ENCODE measurements at regions of chr3 and their contacts with region 1.

Region 1: GRCh38 chr3:115783938-115784738 is 160.8 kb downstream of the GAP43 start:
- DNase-seq: peak; percentile 72 to 90
- H3K4me3 ChIP-seq: peak overlapping the region; percentile 46 to 80 (median 67)
- H3K27ac ChIP-seq: no peak overlapping the region
- H3K4me1 ChIP-seq: peaks cover 0 to 3% (median under 1%) of the 10 kb centered on the region in 4 experiments; a peak in 1 of 7 replicates
- H3K27me3 ChIP-seq: no peaks in the 10 kb centered on the region
- CTCF ChIP-seq: peak; percentile 90 to 99 (median 92)
- EP300 ChIP-seq: peak in 1 of 2 experiments; percentile 25; a peak in 1 of 3 replicates
- POLR2A ChIP-seq: no peak
- RAD21 ChIP-seq: peak; percentile 82 to 87

Region 2: GRCh38 chr3:114697401-114697800 is 1086.7 kb before region 1 on chr3:
- CTCF ChIA-PET with region 1: no interaction called
- POLR2A ChIA-PET with region 1: no interaction called
- DNase-seq: no peak
- H3K4me3 ChIP-seq: no peak overlapping the region
- H3K27ac ChIP-seq: no peak overlapping the region
- H3K4me1 ChIP-seq: peaks cover 0 to 7% (median 2%) of the 10 kb centered on the region in 4 experiments; a peak in 2 of 7 replicates
- H3K27me3 ChIP-seq: no peaks in the 10 kb centered on the region
- CTCF ChIP-seq: no peak
- EP300 ChIP-seq: no peak
- POLR2A ChIP-seq: no peak
- RAD21 ChIP-seq: no peak

Region 3: DNA sequence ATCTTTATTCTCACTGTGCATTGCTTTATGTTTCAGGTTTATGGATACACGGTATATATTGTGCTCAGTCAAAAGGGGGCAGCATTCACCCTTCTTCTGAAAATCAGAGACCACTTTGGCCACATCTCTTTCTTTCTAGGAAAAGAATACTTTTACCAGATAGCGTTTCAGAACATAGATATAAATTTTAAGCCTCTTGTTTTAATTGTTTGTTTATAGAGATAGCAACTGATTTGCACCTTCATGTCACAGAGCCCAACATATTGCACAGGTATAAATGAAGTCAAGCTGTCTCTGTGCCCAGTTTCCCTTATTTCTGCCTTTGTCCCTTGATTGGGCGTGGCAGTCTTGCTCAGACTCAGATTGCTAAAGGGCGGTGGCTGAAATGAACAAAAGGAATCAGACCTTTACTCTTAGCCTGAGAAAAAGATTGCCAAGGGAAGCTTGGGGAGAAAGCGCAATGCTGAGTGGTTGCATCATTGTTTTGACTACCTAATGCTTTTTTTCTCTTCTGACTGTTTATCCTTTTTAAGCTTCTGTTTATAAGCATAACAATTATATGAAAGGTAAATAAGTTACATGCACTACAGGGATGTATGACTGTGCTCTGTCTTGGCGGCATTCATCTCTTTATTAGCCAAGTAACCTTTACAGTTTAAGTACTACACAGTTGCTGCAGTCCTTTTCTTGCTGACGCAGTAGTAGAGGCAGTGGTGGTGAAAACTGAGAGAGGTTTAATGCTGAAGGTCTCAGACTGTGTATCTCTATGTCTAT is 566.3 kb before region 1 on chr3:
- CTCF ChIA-PET with region 1: interaction called, 27 read pairs
- POLR2A ChIA-PET with region 1: interaction called, 3 read pairs
- DNase-seq: peak in 1 of 2 experiments; percentile 25
- H3K4me3 ChIP-seq: no peak overlapping the region
- H3K27ac ChIP-seq: no peak overlapping the region
- H3K4me1 ChIP-seq: peaks cover 0 to 6% (median 5%) of the 10 kb centered on the region in 4 experiments; a peak in 2 of 7 replicates
- H3K27me3 ChIP-seq: no peaks in the 10 kb centered on the region
- CTCF ChIP-seq: peak in 2 of 3 experiments; percentile 53 to 62; a peak in 2 of 4 replicates
- EP300 ChIP-seq: no peak
- POLR2A ChIP-seq: no peak
- RAD21 ChIP-seq: peak; percentile 87 to 88

Region 4: GRCh38 chr3:115692887-115693524 is 91.1 kb before region 1 on chr3:
- CTCF ChIA-PET with region 1: interaction called, 14 read pairs
- POLR2A ChIA-PET with region 1: no interaction called
- DNase-seq: peak; percentile 41 to 84
- H3K4me3 ChIP-seq: no peak overlapping the region
- H3K27ac ChIP-seq: no peak overlapping the region
- H3K4me1 ChIP-seq: no peaks in the 10 kb centered on the region
- H3K27me3 ChIP-seq: no peaks in the 10 kb centered on the region
- CTCF ChIP-seq: peak; percentile 61 to 89 (median 83)
- EP300 ChIP-seq: no peak
- POLR2A ChIP-seq: no peak
- RAD21 ChIP-seq: peak; percentile 99

Region 5: DNA sequence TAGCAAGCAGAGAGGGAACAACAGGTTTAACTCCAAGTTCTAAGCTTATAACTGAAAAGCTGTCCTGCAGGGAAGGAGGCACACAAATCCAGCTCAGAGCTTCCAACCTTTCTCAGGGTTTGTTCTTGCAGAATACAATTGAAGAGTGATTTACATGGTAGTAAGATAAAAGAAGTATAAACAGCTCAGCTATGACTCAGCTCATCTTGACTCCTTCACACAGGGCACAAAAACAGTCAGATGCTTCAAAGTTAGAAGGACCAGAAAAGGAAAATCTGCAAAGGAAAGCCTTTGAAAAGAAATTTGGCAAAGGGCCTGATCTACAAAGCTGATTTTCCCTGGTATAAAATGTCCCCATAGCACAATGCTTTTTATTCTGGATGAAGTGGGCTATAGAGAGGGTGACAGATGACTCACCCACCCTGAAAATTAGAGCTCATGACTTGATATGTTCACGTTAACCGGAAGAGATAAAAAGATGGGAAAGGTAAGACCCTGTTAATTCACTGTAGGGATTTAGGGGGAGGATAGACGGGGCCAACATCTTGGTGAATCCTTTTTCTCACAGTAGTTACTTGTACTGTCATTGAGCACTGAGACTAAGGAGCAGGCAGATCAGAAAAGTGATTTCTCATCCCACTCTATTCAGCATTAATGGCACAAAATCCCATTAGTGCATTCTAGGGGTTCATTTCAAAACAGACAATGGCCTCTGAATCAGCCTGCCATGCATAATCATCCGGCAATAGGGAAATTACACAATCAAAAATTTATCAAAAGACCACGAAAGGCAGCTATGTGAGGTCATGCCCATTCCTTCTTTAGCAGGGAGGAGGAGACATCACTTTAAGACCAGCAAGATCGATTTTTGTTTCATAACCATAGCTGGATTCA is 17.3 kb before region 1 on chr3:
- CTCF ChIA-PET with region 1: interaction called, 20 read pairs
- POLR2A ChIA-PET with region 1: no interaction called
- DNase-seq: no peak
- H3K4me3 ChIP-seq: no peak overlapping the region
- H3K27ac ChIP-seq: 0 out of 2 replicates have a peak overlapping the region, but pooled peaks have one; percentile 26
- H3K4me1 ChIP-seq: peaks cover 0 to 8% (median 1%) of the 10 kb centered on the region in 4 experiments; a peak in 2 of 7 replicates
- H3K27me3 ChIP-seq: no peaks in the 10 kb centered on the region
- CTCF ChIP-seq: no peak
- EP300 ChIP-seq: no peak
- POLR2A ChIP-seq: no peak
- RAD21 ChIP-seq: no peak

Region 6: GRCh38 chr3:115772951-115773350 is 11.2 kb before region 1 on chr3:
- CTCF ChIA-PET with region 1: interaction called, 20 read pairs
- POLR2A ChIA-PET with region 1: interaction called, 7 read pairs
- DNase-seq: no peak
- H3K4me3 ChIP-seq: no peak overlapping the region
- H3K27ac ChIP-seq: no peak overlapping the region
- H3K4me1 ChIP-seq: no peaks in the 10 kb centered on the region
- H3K27me3 ChIP-seq: no peaks in the 10 kb centered on the region
- CTCF ChIP-seq: no peak
- EP300 ChIP-seq: no peak
- POLR2A ChIP-seq: no peak
- RAD21 ChIP-seq: no peak

Region 7: DNA sequence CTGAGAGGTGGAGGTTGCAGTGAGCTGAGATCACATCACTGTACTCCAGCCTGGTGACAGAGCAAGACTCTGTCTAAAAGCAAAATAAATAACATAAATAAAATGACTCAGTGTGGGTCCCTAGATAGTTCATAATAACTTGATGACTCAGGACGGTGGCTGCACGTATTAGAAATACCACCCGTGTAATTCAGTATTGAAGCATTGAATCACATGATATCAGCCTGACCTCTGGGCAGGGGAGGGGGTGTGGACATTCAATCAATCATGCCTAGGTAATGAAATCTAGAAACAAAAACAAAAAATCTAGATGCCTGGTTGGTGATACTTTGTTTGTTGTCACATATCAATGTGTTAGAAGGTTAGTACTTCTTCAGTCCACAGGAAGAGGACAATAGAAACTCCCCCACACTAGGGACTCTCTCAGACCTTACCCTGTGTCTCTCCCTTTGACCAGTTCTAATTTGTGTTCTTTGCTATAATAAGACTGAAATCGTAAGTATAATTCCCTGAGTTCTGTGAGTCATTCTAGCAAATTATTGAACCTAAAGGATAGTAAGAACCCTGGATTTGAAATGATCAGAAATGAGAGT is 16.4 kb after region 1 on chr3:
- CTCF ChIA-PET with region 1: interaction called, 23 read pairs
- POLR2A ChIA-PET with region 1: no interaction called
- DNase-seq: no peak
- H3K4me3 ChIP-seq: no peak overlapping the region
- H3K27ac ChIP-seq: no peak overlapping the region
- H3K4me1 ChIP-seq: peaks cover 0 to 7% (median 0%) of the 10 kb centered on the region in 4 experiments; a peak in 3 of 7 replicates
- H3K27me3 ChIP-seq: no peaks in the 10 kb centered on the region
- CTCF ChIP-seq: no peak
- EP300 ChIP-seq: no peak
- POLR2A ChIP-seq: no peak
- RAD21 ChIP-seq: no peak

Region 8: GRCh38 chr3:115814778-115815380 is 30.7 kb after region 1 on chr3:
- CTCF ChIA-PET with region 1: interaction called, 26 read pairs
- POLR2A ChIA-PET with region 1: no interaction called
- DNase-seq: peak; percentile 50 to 91
- H3K4me3 ChIP-seq: no peak overlapping the region
- H3K27ac ChIP-seq: no peak overlapping the region
- H3K4me1 ChIP-seq: peaks cover 0 to 5% (median 0%) of the 10 kb centered on the region in 4 experiments; a peak in 1 of 7 replicates
- H3K27me3 ChIP-seq: no peaks in the 10 kb centered on the region
- CTCF ChIP-seq: peak; percentile 37 to 89 (median 77)
- EP300 ChIP-seq: no peak
- POLR2A ChIP-seq: no peak
- RAD21 ChIP-seq: peak; percentile 89 to 94

Measured in H1 (cell line).